Heart right ventricle (tissue), 16 donors: ENCODE measurements at regions of chr3 and their contacts with region 1.

Region 1: GRCh38 chr3:106715286-106715685 is 662.0 kb upstream of the CCDC54 start:
- DNase-seq: no peak
- ATAC-seq: no peak
- H3K4me3 ChIP-seq: no peak overlapping the region
- H3K27ac ChIP-seq: no peak overlapping the region
- H3K4me1 ChIP-seq: no peaks in the 10 kb centered on the region
- H3K27me3 ChIP-seq: no peaks in the 10 kb centered on the region
- CTCF ChIP-seq: no peak

Region 2: DNA sequence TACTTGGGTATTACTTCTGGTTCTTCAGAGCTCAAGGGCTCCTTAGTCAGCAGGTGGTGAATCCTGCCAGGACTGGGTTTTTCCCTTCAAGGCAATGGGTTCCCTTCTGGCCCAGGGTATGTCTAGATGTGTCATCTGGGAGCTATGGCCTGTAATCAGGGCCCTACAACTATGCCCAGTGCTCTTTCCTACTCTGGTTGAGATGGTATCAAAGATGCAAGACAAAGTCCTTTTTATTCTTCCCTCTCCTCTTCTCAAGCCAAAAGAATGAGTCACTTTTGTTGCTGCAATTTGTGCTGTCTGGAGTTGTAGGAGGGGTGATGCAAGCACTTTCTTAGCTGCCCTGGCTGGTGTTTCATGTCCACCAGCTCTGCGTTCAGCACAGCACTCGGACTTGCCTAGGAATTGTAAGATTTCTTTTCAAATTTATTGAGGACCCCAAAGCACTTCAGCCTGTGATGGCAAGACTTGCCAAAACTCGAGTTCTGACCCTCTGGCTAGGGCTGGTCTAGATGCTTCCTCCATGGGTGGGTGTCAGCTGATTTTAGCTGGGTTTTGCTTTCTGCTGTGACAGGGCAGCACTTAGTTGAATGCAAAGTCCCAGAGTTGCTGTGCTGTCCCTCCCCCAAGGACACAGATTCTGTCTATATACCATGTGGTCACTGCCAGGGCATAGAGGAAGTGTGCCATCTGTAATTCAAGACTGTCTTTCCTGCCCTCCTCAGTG is 717.3 kb before region 1 on chr3:
- intact Hi-C with region 1: loop called in 1 of 10 experiments (anchors 5 kb)
- DNase-seq: no peak
- ATAC-seq: peak; percentile 24 to 93 (median 74)
- H3K4me3 ChIP-seq: no peak overlapping the region
- H3K27ac ChIP-seq: peak overlapping the region in 7 of 10 donors; percentile 7 to 84 (median 34)
- H3K4me1 ChIP-seq: peaks cover 0 to 12% (median 0%) of the 10 kb centered on the region in 9 donors
- H3K27me3 ChIP-seq: no peaks in the 10 kb centered on the region
- CTCF ChIP-seq: no peak

Region 3: GRCh38 chr3:106367496-106367895 is 347.8 kb before region 1 on chr3:
- intact Hi-C with region 1: no loop called
- DNase-seq: no peak
- ATAC-seq: no peak
- H3K4me3 ChIP-seq: no peak overlapping the region
- H3K27ac ChIP-seq: no peak overlapping the region
- H3K4me1 ChIP-seq: no peaks in the 10 kb centered on the region
- H3K27me3 ChIP-seq: no peaks in the 10 kb centered on the region
- CTCF ChIP-seq: no peak